Right lobe of liver (tissue), 6 donors: ENCODE measurements at regions of chr12 and their contacts with region 1.

Region 1: DNA sequence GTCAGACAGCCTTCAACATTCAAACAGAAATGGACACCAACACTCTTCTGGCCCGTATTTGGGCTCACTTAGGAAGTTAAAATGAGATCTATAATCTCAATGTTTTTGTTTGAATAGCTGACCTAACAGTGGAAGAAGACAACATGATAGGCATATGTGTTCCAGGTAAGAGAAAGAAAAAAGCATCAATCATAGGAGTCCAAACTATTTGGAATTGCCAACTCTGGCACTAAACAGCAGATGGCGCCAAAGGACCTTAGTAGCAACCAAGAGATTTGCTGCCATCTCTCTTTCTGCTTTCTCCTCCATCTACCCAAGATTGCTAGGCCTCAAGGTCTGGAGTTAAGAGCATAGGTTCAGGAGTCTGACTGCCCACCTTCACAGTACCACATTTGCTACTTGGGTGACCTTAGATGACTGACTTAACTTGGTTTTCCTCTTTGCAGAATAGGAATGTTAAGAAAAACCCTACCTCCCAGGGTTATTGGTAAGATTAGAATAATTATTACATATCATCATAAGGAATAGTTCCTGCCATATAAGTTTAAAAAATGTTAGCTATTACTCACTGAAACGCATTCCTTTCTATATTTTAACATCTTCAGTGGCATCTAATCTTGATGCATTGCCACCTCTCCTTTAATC is 30.2 kb downstream of the PEX5 start:
- DNase-seq: peak in 2 of 3 donors; percentile 50 to 73
- ATAC-seq: peak; percentile 87 to 94 (median 91)
- H3K4me3 ChIP-seq: no peak overlapping the region
- H3K27ac ChIP-seq: no peak overlapping the region
- H3K4me1 ChIP-seq: no peaks in the 10 kb centered on the region
- H3K27me3 ChIP-seq: no peaks in the 10 kb centered on the region
- CTCF ChIP-seq: peak; percentile 88 to 92 (median 90)
- POLR2A ChIP-seq: no peak

Region 2: DNA sequence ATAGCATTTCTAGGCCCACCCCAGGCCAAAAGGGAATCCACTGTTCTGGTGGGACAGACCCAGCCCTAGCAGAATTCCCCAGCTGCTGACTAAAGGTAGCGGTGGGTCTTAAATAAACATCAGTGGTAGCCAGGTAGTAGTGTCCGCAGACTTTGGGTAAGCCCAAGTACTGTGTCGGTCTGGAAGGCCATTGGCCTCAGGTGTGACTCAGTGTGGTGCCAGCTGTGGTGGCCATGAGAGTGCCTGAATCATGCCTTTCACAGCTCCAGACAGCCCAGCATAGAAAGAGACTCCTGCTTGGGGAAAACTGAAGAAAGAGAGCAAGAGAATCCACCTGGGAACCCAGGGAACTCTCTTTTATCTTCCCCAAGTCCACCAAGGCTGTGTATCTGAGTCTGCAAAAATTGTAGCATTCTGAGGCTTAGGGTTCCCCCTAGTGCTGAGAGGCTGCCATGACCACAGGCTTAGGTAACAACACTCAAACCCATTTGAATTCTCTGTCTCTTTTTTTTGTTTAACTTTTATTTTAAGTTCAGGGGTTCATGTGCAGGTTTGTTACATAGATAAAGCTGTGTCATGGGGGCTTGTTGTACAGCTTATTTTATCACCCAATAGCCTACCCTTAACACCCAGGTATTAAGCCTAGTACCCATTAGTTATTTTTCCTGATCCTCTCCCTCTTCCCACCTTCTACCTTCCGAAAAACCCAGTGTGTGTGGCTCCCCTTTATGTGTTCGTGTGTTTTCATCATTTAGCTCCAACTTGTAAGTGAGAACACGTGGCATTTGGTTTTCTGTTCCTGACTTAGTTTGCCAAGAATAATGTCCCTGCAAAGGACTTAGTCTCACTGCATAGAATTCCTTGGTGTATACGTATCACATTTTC is 240.9 kb after region 1 on chr12:
- intact Hi-C with region 1: loop called (anchors 10 kb)
- DNase-seq: peak in 1 of 3 donors; percentile 39
- ATAC-seq: peak; percentile 96 to 98 (median 97)
- H3K4me3 ChIP-seq: no peak overlapping the region
- H3K27ac ChIP-seq: no peak overlapping the region
- H3K4me1 ChIP-seq: no peaks in the 10 kb centered on the region
- H3K27me3 ChIP-seq: no peaks in the 10 kb centered on the region
- CTCF ChIP-seq: peak; percentile 89 to 92 (median 90)
- POLR2A ChIP-seq: no peak